ENCODE measurements at regions of chr11 and their contacts with region 1.

Region 1: GRCh38 chr11:73360336-73361013 is 15.7 kb upstream of the RELT start:
- H3K4me3 ChIP-seq: no peak overlapping the region
- H3K27ac ChIP-seq: no peak overlapping the region
- H3K4me1 ChIP-seq: no peaks in the 10 kb centered on the region
- CTCF ChIP-seq: peak; percentile 53; the same call in 1 of the 2 replicates

Region 2: DNA sequence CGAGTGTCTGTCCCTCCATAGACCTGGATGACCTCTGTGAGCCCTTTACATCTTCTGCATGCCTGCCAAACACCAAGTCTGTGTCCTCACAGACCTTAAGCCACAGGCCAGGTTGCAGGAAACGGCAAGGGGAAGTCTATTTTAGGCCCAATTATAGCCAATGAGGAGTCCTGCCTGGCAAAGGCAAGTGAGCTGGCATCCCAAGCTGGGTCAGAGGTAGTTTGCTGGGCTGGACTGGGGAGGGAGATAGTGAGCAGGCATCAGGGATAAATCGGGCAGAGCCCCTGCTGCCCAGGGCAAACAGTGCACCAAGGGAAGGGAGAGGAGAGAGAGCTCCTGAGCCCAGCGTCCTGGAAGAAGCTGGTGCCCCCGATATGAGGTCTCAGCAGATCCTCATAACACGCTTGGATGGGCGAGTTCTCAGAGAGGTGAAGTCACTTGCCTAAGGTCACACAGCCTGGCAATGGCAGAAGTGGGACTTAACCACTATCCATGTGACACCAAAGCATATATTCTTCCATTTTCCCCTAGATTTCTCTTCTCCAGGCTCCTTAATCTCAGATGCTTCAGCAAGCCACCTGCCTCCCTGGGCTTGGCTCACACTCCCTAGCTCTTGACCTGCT is 12.0 kb after region 1 on chr11:
- CTCF ChIA-PET with region 1: interaction called, 14 read pairs
- POLR2A ChIA-PET with region 1: interaction called, 3 read pairs
- H3K4me3 ChIP-seq: no peak overlapping the region
- H3K27ac ChIP-seq: no peak overlapping the region
- H3K4me1 ChIP-seq: no peaks in the 10 kb centered on the region
- CTCF ChIP-seq: no peak

Measured in HEK293 (cell line).